ENCODE measurements at regions of chr2 and their contacts with region 1.

Region 1: DNA sequence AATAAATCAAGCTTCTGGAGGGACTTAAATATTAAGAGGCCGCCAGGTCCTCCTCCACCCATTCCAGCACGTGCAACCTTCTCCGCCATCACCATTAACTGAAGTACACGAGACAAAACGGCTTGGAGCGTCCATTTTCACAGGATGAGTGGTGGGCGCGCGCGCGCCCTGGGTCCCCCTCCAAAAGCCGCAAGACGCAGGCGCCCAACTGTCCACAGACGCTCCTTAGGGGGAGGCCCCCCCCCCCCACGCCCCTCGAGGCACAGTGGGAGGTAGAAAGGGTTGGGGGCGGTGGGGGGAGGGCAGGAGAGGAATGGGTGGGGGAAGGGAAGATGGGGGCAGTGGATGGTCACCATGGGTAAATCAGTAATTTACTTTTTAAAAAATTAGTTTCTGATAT is 10.5 kb upstream of the STAMBP start:
- DNase-seq: no peak
- H3K4me3 ChIP-seq: no peak overlapping the region
- CTCF ChIP-seq: no peak

Region 2: DNA sequence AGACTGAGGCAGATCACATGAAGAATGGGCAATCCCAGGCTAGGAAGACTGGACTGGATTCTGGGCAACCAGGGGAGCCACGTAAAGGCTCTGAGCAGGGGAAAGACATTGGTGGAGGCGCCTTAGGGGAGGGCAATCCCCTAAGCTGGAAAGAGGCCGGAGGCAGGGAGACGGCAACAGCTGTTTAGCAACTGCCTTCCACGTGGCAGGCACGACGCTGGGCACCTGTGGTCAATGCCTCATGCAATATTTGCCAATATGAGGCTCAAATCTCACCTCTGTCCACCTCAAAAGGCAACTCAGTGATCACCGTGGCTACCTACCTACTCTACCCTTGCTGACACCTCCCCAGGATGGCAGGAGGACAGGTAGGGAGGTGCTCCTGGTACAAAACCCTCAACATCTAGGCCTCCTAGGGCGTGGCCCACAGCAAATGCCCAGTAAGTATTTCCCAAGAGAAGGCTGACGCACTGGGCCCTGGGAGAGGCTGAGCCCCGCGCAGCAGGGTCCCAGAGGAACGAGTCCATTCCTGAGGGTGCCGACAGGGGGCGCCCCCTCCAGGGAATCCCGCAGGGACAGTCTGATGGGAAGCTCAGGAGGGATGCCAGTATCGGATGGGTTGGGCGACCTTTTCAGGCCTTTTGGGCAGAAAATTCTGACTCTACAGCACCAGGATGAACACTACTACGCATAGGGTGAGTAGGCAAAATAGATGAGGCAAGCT is 320.5 kb after region 1 on chr2:
- in situ Hi-C with region 1: loop called (anchors 10 kb)
- DNase-seq: no peak
- H3K4me3 ChIP-seq: no peak overlapping the region
- CTCF ChIP-seq: no peak

Measured in astrocyte of the cerebellum (primary cell).